ENCODE measurements at regions of chr9 and their contacts with region 1.

Region 1: DNA sequence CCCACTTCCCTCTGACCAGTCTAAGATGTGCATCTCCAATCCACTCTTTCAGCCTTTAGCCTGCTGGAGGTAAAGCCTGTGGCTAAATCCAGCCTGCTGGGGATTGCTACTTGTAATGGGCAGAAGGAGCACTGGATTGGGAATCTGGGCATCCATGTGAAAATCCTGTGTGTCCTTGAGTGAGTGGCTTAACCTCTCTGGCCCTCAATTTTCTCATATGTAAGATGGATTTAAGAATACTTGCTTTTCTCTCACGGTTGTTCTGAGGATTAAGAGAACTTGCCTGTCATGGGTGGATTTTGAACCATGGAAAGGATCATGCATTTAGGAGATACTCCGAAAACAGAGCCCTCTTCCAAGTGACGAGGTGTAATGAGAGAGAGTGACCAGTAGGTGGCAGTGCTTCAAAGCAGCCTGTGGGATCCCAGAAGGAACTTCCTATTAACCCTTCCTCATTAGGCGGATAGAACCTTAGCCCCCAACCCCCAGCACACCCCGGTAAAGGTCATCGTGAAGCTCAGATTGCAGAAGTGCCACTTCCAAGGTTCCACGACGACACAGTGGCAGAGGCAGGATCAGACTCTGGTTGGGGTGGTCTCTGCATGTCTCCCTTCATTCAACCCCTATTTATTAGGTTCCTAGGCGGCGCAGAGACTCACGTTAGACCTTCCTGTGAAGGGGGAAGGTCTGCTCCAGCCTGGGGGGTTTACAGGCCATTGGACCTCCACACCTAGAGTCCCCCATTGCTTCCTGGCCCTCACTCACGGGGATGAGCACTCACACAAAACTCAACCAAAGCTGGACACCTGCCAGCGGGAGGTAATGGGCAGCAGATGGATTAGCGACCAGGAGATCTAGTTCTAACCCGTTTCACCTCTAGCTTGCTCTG is 68.7 kb upstream of the ZNF618 start:
- DNase-seq: peak; percentile 55
- H3K4me3 Mint-ChIP-seq: no peak overlapping the region
- H3K27ac Mint-ChIP-seq: no peak overlapping the region
- H3K4me1 Mint-ChIP-seq: no peaks in the 10 kb centered on the region
- H3K27me3 Mint-ChIP-seq: peaks cover 12% of the 10 kb centered on the region

Region 2: GRCh38 chr9:113728989-113729388 is 78.4 kb before region 1 on chr9:
- CTCF ChIA-PET with region 1: no interaction called
- DNase-seq: no peak
- H3K4me3 Mint-ChIP-seq: no peak overlapping the region
- H3K27ac Mint-ChIP-seq: no peak overlapping the region
- H3K4me1 Mint-ChIP-seq: no peaks in the 10 kb centered on the region
- H3K27me3 Mint-ChIP-seq: peaks cover 7% of the 10 kb centered on the region

Region 3: GRCh38 chr9:113963017-113963620 is 155.7 kb after region 1 on chr9:
- CTCF ChIA-PET with region 1: interaction called, 41 read pairs
- DNase-seq: peak; percentile 62
- H3K4me3 Mint-ChIP-seq: no peak overlapping the region
- H3K27ac Mint-ChIP-seq: no peak overlapping the region
- H3K4me1 Mint-ChIP-seq: no peaks in the 10 kb centered on the region
- H3K27me3 Mint-ChIP-seq: no peaks in the 10 kb centered on the region